ENCODE measurements at regions of chr9 and their contacts with region 1.

Region 1: DNA sequence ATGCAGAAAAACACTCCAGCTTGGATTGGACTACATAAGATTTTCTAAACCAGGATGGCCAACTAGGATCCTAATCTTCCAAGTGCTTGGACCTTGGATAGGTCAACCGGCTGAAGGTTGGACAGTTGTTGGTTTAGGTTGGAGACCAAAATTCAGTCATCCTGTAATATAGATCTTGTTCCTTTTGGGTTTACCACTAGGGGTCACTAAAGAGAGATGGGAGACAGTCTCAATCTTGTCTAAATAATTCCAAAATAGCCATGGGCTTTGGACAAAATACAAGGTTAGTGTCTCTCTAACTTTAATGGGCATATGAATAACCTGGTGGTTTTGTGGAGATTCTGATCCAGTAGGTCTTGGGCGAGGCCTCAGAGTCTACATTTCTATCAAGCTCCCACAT is 148.7 kb upstream of the ERCC6L2 start:
- DNase-seq: no peak
- H3K4me3 ChIP-seq: no peak overlapping the region
- H3K27ac ChIP-seq: no peak overlapping the region
- H3K4me1 ChIP-seq: no peaks in the 10 kb centered on the region
- H3K27me3 ChIP-seq: peaks cover 47% of the 10 kb centered on the region; the same call in 1 of the 2 replicates
- CTCF ChIP-seq: peak; percentile 74

Region 2: GRCh38 chr9:96031366-96031824 is 304.6 kb after region 1 on chr9:
- CTCF ChIA-PET with region 1: no interaction called
- POLR2A ChIA-PET with region 1: no interaction called
- intact Hi-C with region 1: no loop called
- DNase-seq: peak in 1 of 2 experiments; percentile 22
- H3K4me3 ChIP-seq: no peak overlapping the region
- H3K27ac ChIP-seq: no peak overlapping the region
- H3K4me1 ChIP-seq: no peaks in the 10 kb centered on the region
- H3K27me3 ChIP-seq: peaks cover 36% of the 10 kb centered on the region
- CTCF ChIP-seq: no peak

Region 3: GRCh38 chr9:96061293-96061987 is 334.7 kb after region 1 on chr9:
- CTCF ChIA-PET with region 1: no interaction called
- POLR2A ChIA-PET with region 1: no interaction called
- intact Hi-C with region 1: loop called (anchors 10 kb)
- DNase-seq: peak in 1 of 2 experiments; percentile 13
- H3K4me3 ChIP-seq: no peak overlapping the region
- H3K27ac ChIP-seq: no peak overlapping the region
- H3K4me1 ChIP-seq: no peaks in the 10 kb centered on the region
- H3K27me3 ChIP-seq: peaks cover 31% of the 10 kb centered on the region; the same call in 1 of the 2 replicates
- CTCF ChIP-seq: no peak; the same call in 1 of the 2 replicates